MCF 10A (cell line): ENCODE measurements at regions of chr12 and their contacts with region 1.

Region 1: GRCh38 chr12:546921-547845 is 87.4 kb downstream of the B4GALNT3 start:
- DNase-seq: peak; percentile 69
- H3K4me3 Mint-ChIP-seq: no peak overlapping the region
- H3K27ac Mint-ChIP-seq: no peak overlapping the region
- H3K4me1 Mint-ChIP-seq: no peaks in the 10 kb centered on the region
- H3K27me3 Mint-ChIP-seq: peaks cover 42% of the 10 kb centered on the region
- CTCF ChIP-seq: peak; percentile 96

Region 2: DNA sequence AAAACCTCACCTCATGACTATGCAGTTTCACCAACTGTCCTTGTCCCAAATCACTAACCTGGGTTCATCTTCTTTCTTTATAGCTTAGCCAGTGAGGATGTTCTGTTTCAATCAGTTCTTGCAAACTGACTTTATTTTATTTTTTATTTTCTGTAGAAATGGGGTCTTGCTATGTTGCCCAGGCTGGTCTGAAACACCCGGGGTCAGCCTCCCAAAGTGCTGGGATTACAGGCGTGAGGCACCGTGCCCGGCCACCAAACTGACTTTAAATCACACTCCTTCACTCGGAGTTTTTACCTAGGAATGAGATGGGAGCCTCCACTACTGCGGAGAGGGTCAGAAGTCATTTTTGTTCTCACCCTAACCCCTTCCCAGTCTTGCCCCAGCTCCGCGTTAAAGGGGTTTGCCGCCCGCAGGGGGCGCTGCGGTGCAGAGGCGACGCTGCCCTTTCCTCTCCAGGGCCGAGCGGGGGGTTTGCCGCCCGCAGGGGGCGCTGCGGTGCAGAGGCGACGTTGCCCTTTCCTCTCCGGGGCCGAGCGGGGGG is 94.4 kb before region 1 on chr12:
- CTCF ChIA-PET with region 1: interaction called, 60 read pairs
- POLR2A ChIA-PET with region 1: no interaction called
- intact Hi-C with region 1: loop called (anchors 5 kb)
- DNase-seq: no peak
- H3K4me3 Mint-ChIP-seq: no peak overlapping the region
- H3K27ac Mint-ChIP-seq: no peak overlapping the region
- H3K4me1 Mint-ChIP-seq: no peaks in the 10 kb centered on the region
- H3K27me3 Mint-ChIP-seq: peaks cover 28% of the 10 kb centered on the region
- CTCF ChIP-seq: peak; percentile 49

Region 3: GRCh38 chr12:459430-460258 is 87.5 kb before region 1 on chr12 and contains the start of gene B4GALNT3:
- CTCF ChIA-PET with region 1: interaction called, 60 read pairs
- POLR2A ChIA-PET with region 1: no interaction called
- intact Hi-C with region 1: loop called (anchors 5 kb)
- DNase-seq: peak; percentile 39
- H3K4me3 Mint-ChIP-seq: peak within 1 kb of the TSS; percentile 71
- H3K27ac Mint-ChIP-seq: no peak within 1 kb of the TSS
- H3K4me1 Mint-ChIP-seq: peaks cover 23% of the 10 kb centered on the region
- H3K27me3 Mint-ChIP-seq: peaks cover 44% of the 10 kb centered on the region
- CTCF ChIP-seq: no peak
- total RNA-seq, gene B4GALNT3: 0.68 and 0.76 TPM in 2 replicates

Region 4: DNA sequence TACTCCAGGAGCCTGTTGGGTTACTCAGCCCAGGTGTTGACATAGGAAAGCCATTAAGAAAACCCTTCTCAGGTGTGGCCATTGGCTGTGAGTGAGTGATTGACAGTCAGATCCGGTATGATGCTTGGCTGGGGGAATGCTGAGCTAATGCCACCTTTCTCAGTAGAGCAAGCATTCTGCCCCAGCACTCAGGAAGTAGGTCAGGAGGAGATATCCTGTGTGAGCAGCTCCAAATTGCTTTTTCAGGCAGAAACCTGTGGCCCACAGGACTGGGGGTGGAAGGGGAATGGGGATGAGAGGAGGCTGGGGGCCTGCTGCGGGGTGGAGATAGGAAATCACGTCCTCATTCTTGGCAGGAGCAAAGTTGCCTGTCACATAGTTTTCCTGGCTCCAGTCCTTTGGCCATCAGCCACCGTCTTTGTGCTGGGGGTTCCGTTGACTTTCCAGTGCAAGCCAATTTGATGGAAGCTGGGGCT is 60.4 kb after region 1 on chr12:
- CTCF ChIA-PET with region 1: no interaction called
- POLR2A ChIA-PET with region 1: no interaction called
- intact Hi-C with region 1: no loop called
- DNase-seq: no peak
- H3K4me3 Mint-ChIP-seq: no peak overlapping the region
- H3K27ac Mint-ChIP-seq: no peak overlapping the region
- H3K4me1 Mint-ChIP-seq: peaks cover 13% of the 10 kb centered on the region
- H3K27me3 Mint-ChIP-seq: no peaks in the 10 kb centered on the region
- CTCF ChIP-seq: no peak

Region 5: GRCh38 chr12:690466-690865 is 143.3 kb after region 1 on chr12:
- CTCF ChIA-PET with region 1: no interaction called
- POLR2A ChIA-PET with region 1: no interaction called
- intact Hi-C with region 1: no loop called
- DNase-seq: no peak
- H3K4me3 Mint-ChIP-seq: no peak overlapping the region
- H3K27ac Mint-ChIP-seq: no peak overlapping the region
- H3K4me1 Mint-ChIP-seq: no peaks in the 10 kb centered on the region
- H3K27me3 Mint-ChIP-seq: no peaks in the 10 kb centered on the region
- CTCF ChIP-seq: no peak